Activated B cell treated with CpG ODN at 0.5 μM for 24 hours (primary cell): ENCODE measurements at regions of chr15 and their contacts with region 1.

Region 1: GRCh38 chr15:79853458-79854328 is 43.1 kb downstream of the MTHFS start:
- DNase-seq: peak; percentile 20
- ATAC-seq: peak; percentile 99
- H3K4me3 Mint-ChIP-seq: no peak overlapping the region
- H3K27ac Mint-ChIP-seq: no peak overlapping the region
- H3K4me1 Mint-ChIP-seq: peaks cover 23% of the 10 kb centered on the region
- H3K27me3 Mint-ChIP-seq: no peaks in the 10 kb centered on the region
- CTCF ChIP-seq: peak; percentile 76

Region 2: DNA sequence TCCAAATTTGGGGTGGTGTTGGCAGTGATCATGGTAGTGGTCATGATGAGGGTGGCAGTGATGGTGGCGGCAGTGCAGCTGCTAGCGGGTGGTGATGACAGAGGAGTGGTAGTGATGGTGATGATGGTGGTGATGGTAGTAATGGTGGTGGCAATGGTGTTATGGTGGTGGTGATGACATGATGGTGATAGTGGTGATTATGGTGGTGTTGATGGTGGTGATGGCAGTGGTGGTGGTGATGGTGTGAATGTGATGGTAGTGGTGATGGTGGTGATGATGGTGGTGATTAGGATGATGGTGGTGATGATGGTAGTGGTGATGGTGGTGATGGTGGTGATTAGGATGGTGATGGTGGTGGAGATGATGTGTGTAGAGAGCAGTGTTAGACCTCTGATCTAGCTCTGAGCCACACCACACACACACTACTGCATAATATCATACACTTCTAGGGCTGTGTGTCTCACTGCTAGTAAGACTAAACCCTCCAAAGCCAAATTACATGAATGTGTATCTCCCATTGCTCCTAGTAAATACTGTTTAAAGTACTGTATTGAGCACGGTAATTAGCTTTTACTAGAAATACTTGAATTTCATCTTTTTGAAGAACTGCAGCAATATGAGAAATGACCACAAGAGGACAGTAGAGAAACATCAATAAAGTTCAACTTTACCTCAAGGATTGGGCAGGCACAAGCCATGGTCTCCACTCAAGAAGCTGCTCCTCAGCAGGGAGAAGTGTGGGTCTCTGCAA is 514.0 kb before region 1 on chr15:
- CTCF ChIA-PET with region 1: interaction called, 10 read pairs
- POLR2A ChIA-PET with region 1: no interaction called
- intact Hi-C with region 1: loop called (anchors 2 kb)
- DNase-seq: no peak
- ATAC-seq: no peak
- H3K4me3 Mint-ChIP-seq: no peak overlapping the region
- H3K27ac Mint-ChIP-seq: no peak overlapping the region
- H3K4me1 Mint-ChIP-seq: no peaks in the 10 kb centered on the region
- H3K27me3 Mint-ChIP-seq: no peaks in the 10 kb centered on the region
- CTCF ChIP-seq: no peak

Region 3: DNA sequence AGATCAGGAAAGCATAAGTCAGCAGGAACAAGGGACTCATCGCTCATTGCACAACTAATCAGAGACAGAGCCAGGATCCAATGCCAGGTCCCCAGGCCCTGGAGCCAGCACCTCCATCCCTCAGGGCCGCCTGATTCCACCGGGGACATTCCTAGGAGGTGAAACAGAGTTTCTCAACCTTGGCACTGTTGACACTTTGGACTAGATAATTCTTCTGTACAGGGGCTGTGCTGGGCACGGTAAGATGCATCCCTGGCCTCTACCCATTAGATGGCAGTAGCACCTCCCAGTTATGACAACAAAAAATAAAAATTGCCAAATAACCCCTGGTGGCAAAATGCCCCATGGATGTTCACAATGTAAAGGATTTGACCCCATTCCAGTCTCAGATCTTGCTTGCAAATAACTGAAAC is 84.6 kb before region 1 on chr15:
- CTCF ChIA-PET with region 1: interaction called, 3 read pairs
- POLR2A ChIA-PET with region 1: no interaction called
- intact Hi-C with region 1: loop called (anchors 1 kb)
- DNase-seq: no peak
- ATAC-seq: no peak
- H3K4me3 Mint-ChIP-seq: no peak overlapping the region
- H3K27ac Mint-ChIP-seq: no peak overlapping the region
- H3K4me1 Mint-ChIP-seq: no peaks in the 10 kb centered on the region
- H3K27me3 Mint-ChIP-seq: peaks cover 8% of the 10 kb centered on the region
- CTCF ChIP-seq: no peak

Region 4: GRCh38 chr15:79868554-79868953 is 14.9 kb after region 1 on chr15:
- CTCF ChIA-PET with region 1: interaction called, 13 read pairs
- POLR2A ChIA-PET with region 1: no interaction called
- intact Hi-C with region 1: no loop called
- DNase-seq: no peak
- ATAC-seq: no peak
- H3K4me3 Mint-ChIP-seq: no peak overlapping the region
- H3K27ac Mint-ChIP-seq: no peak overlapping the region
- H3K4me1 Mint-ChIP-seq: peaks cover 10% of the 10 kb centered on the region
- H3K27me3 Mint-ChIP-seq: no peaks in the 10 kb centered on the region
- CTCF ChIP-seq: no peak

Region 5: DNA sequence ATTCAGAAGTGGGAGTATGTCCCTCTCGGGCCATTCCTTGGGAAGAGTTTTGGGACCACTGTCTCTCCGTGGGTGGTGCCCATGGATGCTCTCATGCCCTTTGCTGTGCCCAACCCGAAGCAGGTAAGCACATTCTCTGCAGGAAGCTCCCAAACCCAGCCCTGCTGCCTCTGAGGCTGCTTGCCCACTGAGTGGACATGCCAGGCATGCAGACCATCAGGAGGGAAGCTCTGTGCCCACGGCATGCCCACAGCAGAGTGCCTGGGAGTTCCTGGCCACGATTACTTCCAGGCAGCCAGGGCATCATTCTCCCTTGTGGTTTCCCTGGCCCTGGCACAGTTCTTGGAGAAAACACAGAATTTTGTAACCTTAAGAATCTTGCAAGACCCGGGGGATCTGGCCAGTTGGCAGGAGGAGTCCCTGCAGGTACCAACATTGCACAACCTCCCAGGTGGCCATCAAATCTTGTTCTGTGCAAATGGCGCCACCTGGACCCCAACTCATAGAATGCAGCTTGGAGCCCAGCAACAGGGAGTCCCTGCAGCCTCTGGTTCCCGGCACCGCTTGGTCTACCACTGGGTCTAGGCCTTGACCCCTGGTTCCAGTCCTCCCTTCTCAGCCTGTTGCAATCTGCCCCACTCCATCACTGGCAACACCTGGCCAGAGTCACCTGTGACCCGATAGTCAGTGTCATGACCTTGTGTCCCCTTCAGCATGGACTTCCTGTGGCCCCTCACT is 319.5 kb after region 1 on chr15:
- CTCF ChIA-PET with region 1: interaction called, 6 read pairs
- POLR2A ChIA-PET with region 1: no interaction called
- intact Hi-C with region 1: loop called (anchors 2 kb)
- DNase-seq: peak; percentile 59
- ATAC-seq: peak; percentile 85
- H3K4me3 Mint-ChIP-seq: no peak overlapping the region
- H3K27ac Mint-ChIP-seq: peak overlapping the region; percentile 35
- H3K4me1 Mint-ChIP-seq: no peaks in the 10 kb centered on the region
- H3K27me3 Mint-ChIP-seq: no peaks in the 10 kb centered on the region
- CTCF ChIP-seq: no peak